SK-N-SH (cell line): ENCODE measurements at regions of chr13 and their contacts with region 1.

Region 1: GRCh38 chr13:108961542-108962125 is 332.2 kb downstream of the MYO16 start:
- DNase-seq: peak; percentile 63
- H3K4me3 ChIP-seq: no peak overlapping the region
- H3K27ac ChIP-seq: peak overlapping the region in 1 of 2 experiments; percentile 63; a peak in 2 of 4 replicates
- H3K4me1 ChIP-seq: peaks cover 5 to 20% of the 10 kb centered on the region in 2 experiments; a peak in 3 of 4 replicates
- H3K27me3 ChIP-seq: no peaks in the 10 kb centered on the region
- CTCF ChIP-seq: peak; percentile 87
- EP300 ChIP-seq: no peak
- RAD21 ChIP-seq: peak; percentile 97

Region 2: GRCh38 chr13:108915634-108916512 is 45.8 kb before region 1 on chr13:
- CTCF ChIA-PET with region 1: interaction called, 23 read pairs
- POLR2A ChIA-PET with region 1: no interaction called
- DNase-seq: no peak
- H3K4me3 ChIP-seq: no peak overlapping the region
- H3K27ac ChIP-seq: no peak overlapping the region; a peak in 1 of 4 replicates
- H3K4me1 ChIP-seq: peaks cover 5 to 18% of the 10 kb centered on the region in 2 experiments
- H3K27me3 ChIP-seq: no peaks in the 10 kb centered on the region; the same call in 1 of the 2 replicates
- CTCF ChIP-seq: no peak
- EP300 ChIP-seq: 0 out of 4 replicates have a peak, but pooled peaks of 1 of the 2 experiments have one; percentile 22
- RAD21 ChIP-seq: no peak

Region 3: DNA sequence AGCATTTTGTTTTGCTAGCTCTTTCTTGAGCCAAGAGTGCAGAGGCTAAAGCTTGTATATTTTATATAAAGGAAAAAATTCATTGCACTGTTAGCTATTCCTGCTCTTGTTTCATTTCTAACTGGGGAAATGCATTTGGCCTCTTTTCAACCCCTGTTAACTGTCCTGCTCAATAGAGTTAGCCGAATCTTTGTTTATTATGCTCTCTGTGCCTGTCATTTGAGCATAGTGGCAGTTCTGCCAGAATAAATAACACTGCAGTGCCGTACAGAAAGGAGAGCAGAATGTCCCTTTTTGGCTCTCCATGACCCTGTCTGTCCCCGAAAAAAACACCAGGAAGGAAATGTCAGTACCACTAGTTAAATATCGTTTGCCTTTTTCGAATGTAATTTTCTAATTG is 18.6 kb after region 1 on chr13:
- CTCF ChIA-PET with region 1: interaction called, 23 read pairs
- POLR2A ChIA-PET with region 1: no interaction called
- DNase-seq: no peak
- H3K4me3 ChIP-seq: no peak overlapping the region
- H3K27ac ChIP-seq: no peak overlapping the region
- H3K4me1 ChIP-seq: no peaks in the 10 kb centered on the region; a peak in 2 of 4 replicates
- H3K27me3 ChIP-seq: no peaks in the 10 kb centered on the region
- CTCF ChIP-seq: no peak
- EP300 ChIP-seq: no peak
- RAD21 ChIP-seq: no peak

Region 4: DNA sequence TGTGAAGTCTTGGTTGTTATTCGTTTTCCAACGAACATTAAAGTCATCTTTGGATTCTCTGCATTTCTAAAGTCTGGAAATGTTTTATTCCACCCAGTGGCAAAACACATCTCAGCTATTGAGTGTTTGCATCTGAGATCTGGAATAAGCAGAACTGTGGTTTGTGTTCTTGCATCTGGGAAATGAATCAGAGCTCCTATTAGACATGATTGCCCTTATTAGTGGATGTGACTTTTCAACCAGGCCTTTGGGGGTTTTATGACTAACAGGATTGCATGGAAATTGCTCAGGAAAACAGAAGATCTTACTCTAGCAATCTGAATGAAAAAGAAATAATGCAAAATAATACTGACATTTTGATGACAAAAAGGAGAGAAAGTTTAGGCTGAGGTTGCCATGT is 336.0 kb after region 1 on chr13:
- CTCF ChIA-PET with region 1: no interaction called
- POLR2A ChIA-PET with region 1: no interaction called
- DNase-seq: peak; percentile 36
- H3K4me3 ChIP-seq: no peak overlapping the region
- H3K27ac ChIP-seq: peak overlapping the region; percentile 51 to 55
- H3K4me1 ChIP-seq: peaks cover 0 to 9% of the 10 kb centered on the region in 2 experiments; a peak in 3 of 4 replicates
- H3K27me3 ChIP-seq: no peaks in the 10 kb centered on the region
- CTCF ChIP-seq: no peak
- EP300 ChIP-seq: peak; percentile 48 to 66; a peak in 3 of 4 replicates
- RAD21 ChIP-seq: peak; percentile 25; the same call in 1 of the 2 replicates

Region 5: GRCh38 chr13:109779074-109779473 is 817.4 kb after region 1 on chr13:
- CTCF ChIA-PET with region 1: interaction called, 31 read pairs
- POLR2A ChIA-PET with region 1: no interaction called
- DNase-seq: peak; percentile 36
- H3K4me3 ChIP-seq: peak overlapping the region; percentile 73 to 84
- H3K27ac ChIP-seq: peak overlapping the region; percentile 64 to 96
- H3K4me1 ChIP-seq: peaks cover 9 to 18% of the 10 kb centered on the region in 2 experiments; a peak in 3 of 4 replicates
- H3K27me3 ChIP-seq: no peaks in the 10 kb centered on the region
- CTCF ChIP-seq: no peak
- EP300 ChIP-seq: no peak
- RAD21 ChIP-seq: no peak

Region 6: DNA sequence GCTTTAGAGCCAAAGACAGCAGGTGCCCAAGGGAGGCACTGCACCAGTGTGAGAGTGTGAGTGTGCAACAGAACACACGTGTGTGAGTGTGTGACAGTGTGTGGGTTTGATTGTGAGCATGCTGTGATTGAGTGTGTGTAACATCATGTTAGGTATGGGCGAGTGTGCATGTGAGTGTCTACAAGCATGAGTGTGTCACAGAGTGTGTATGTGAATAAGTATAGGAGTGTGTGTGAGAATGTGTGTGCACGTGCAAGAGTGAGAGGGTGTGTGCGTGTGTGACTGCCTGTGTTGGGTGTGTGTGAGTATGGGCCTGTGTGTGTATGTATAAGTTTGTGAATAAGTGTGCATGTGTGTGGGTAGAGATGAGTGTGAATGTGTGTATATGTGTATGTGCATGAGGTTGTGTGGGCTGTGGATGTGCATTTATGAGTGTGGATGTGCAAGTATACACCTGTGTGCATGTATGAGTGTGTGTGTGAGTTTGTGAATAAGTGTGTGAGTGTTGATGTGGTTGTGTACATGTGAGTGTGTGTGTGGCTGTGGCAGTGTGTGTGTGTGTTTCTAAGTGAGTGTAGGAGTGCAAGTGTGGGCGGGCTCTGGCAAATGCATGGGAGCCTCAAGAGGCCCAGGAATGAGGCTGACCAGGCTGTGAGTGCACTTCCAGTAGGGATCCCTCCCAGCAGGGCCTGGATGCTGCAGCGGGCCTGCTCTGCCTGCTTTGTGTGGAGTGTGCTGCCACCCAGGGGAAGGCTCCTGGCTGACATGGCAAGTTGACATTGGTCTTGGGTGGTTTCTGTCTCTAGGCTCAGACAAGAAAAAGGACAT is 1146.9 kb after region 1 on chr13:
- CTCF ChIA-PET with region 1: interaction called, 20 read pairs
- POLR2A ChIA-PET with region 1: no interaction called
- DNase-seq: peak; percentile 91
- H3K4me3 ChIP-seq: no peak overlapping the region
- H3K27ac ChIP-seq: no peak overlapping the region
- H3K4me1 ChIP-seq: peaks cover 6 to 23% of the 10 kb centered on the region in 2 experiments; a peak in 3 of 4 replicates
- H3K27me3 ChIP-seq: no peaks in the 10 kb centered on the region
- CTCF ChIP-seq: peak; percentile 85
- EP300 ChIP-seq: no peak
- RAD21 ChIP-seq: peak; percentile 97